ENCODE measurements at regions of chr6 and their contacts with region 1.

Region 1: GRCh38 chr6:138869398-138869797 is 73.5 kb downstream of the ECT2L start:
- DNase-seq: no peak
- ATAC-seq: no peak
- H3K4me3 Mint-ChIP-seq: no peak overlapping the region
- H3K27ac Mint-ChIP-seq: no peak overlapping the region
- H3K4me1 Mint-ChIP-seq: peaks cover 22% of the 10 kb centered on the region
- H3K27me3 Mint-ChIP-seq: no peaks in the 10 kb centered on the region

Region 2: DNA sequence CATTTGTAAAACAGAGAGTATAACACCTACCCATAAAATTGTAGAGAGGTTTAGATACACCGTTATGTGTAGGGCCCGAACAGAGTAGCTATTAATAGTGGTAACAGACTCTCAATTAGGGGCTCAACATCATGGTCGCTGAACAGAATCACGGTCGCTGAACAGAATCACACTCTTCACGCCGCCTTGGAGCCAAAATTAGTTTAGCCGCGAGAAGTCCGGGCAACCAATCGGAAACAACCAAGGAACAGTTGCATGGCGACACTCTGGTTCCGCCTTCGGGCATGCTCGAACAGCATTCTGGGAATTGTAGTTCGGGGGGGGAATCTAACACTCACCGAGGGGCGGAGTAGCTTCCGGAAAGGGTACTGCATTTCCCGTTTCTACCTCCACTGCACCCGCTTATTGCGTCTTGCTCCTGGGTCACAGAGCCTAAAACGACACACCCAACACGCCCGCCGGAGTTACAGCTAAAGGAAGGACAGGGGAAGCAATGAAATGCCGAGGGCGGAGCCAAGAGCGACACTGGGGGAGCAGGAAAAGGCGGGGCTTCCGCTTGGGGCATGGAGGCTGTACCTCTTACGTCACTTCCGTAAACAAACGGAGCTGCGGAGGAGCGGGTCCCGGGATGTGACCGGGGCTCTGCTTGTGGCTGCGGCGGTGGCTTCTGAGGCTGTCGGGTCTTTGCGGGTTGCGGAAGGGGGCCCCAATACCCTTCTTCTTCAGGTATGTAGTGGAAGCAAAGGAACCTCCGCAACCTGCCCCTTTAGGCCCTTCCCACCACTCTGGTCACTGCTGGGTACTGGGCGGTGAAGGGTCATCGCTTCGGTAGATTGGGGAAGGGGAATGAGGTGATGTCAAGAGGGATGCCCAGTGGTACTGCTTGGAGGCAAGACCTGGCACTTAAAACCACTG is 96.0 kb before region 1 on chr6 and contains the start of gene CCDC28A:
- CTCF ChIA-PET with region 1: no interaction called
- POLR2A ChIA-PET with region 1: interaction called, 15 read pairs
- intact Hi-C with region 1: no loop called
- DNase-seq: peak; percentile 95
- ATAC-seq: peak; percentile 91
- H3K4me3 Mint-ChIP-seq: peak within 1 kb of the TSS; percentile 84
- H3K27ac Mint-ChIP-seq: peak within 1 kb of the TSS; percentile 98
- H3K4me1 Mint-ChIP-seq: peaks cover 31% of the 10 kb centered on the region
- H3K27me3 Mint-ChIP-seq: no peaks in the 10 kb centered on the region
- total RNA-seq, gene CCDC28A: 14.8 to 16.8 TPM

Measured in activated CD4-positive, alpha-beta T cell treated with anti-CD3 and anti-CD28 coated beads for 36 hours (primary cell).